MCF 10A (cell line): ENCODE measurements at regions of chr2 and their contacts with region 1.

Region 1: DNA sequence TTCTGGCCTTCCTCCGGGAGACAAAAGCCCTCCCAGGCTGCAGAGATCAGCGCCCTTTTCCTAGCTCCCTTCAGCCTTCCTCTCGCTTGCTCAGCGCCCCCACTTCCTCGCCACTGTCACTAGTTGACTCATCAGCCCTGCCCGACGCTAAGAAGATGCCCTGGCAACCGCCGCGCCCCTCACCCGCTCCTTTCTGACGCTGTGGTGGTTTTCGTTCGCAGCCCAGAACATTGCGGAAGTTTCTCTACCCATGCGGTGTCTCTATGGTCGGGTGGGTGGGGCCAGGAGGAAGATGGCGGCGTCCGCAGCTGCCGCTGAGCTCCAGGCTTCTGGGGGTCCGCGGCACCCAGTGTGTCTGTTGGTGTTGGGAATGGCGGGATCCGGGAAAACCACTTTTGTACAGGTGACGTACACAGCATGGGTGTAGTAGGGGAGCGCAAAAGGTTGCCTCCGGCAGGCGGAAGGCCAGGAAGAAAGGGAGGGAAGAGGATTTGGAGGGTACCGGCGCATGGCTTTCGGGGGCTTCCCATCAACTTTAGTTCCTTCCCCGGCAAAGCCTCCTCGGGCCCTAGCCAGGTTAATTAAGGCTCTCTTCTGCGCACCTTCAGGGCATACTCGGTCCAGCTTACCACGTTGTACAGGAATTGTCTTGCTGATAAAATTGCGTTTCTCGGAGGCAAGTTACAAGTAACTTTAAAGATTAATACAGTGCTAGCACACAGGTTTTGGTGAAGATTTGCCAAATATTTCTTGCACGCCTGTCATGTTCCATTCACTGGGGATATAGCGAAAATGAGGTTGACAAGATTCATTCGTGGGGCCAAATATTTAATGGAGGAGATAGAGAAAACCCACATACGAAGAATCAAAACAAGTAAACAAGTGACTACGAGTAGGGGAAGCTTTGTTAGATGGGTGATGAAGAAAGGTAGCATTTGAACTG is at the starts of genes CCDC121 and GPN1:
- DNase-seq: peak; percentile 90
- H3K4me3 Mint-ChIP-seq: no peak within 1 kb of the TSS
- H3K27ac Mint-ChIP-seq: no peak within 1 kb of the TSS
- H3K4me1 Mint-ChIP-seq: peaks cover 17% of the 10 kb centered on the region
- H3K27me3 Mint-ChIP-seq: no peaks in the 10 kb centered on the region
- CTCF ChIP-seq: no peak
- total RNA-seq, gene CCDC121: 0.61 and 2.3 TPM in 2 replicates
- total RNA-seq, gene GPN1: 28.6 and 30.5 TPM in 2 replicates

Region 2: DNA sequence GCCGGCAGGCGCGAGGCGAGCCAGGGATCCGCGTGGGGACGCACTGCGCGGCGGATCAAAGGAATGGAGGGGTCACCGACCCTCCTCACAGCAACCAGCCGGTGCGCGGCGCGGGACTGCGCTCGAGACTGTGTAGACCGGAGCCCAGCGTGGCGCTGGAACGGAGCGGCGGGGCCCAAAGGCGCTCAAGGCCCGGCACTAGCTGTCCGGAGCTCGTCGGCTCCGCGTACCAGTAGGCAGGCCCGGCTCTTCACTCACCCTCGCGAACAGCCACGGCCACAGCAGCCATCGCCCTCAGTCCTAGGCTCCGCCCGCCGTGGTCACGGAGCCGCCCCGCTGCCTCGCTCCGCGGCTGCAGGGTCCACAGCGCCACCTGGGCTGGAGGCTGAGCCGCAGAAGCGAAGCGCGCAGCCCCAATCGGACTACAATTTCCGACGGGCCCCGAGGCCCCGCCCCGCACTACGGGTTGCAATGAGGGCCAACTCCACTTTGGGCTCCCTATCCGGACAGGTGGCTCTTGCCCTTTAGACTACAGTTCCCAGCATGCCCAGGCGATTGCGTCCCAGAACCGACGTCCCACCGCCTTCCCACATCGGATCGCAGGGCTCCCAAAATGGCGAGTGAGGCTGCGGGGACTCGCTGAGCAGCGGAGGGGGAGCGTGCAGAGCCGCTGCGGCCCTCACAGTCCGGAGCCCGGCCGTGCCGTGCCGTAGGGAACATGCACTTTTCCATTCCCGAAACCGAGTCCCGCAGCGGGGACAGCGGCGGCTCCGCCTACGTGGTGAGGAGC is 258.8 kb before region 1 on chr2 and contains the starts of genes EIF2B4 and SNX17:
- CTCF ChIA-PET with region 1: no interaction called
- POLR2A ChIA-PET with region 1: interaction called, 18 read pairs
- intact Hi-C with region 1: no loop called
- DNase-seq: peak; percentile 99
- H3K4me3 Mint-ChIP-seq: peak within 1 kb of the TSS; percentile 86
- H3K27ac Mint-ChIP-seq: peak within 1 kb of the TSS; percentile 81
- H3K4me1 Mint-ChIP-seq: peaks cover 21% of the 10 kb centered on the region
- H3K27me3 Mint-ChIP-seq: no peaks in the 10 kb centered on the region
- CTCF ChIP-seq: peak; percentile 69
- total RNA-seq, gene EIF2B4: 42.7 and 50.1 TPM in 2 replicates
- total RNA-seq, gene SNX17: 101 and 125 TPM in 2 replicates

Region 3: DNA sequence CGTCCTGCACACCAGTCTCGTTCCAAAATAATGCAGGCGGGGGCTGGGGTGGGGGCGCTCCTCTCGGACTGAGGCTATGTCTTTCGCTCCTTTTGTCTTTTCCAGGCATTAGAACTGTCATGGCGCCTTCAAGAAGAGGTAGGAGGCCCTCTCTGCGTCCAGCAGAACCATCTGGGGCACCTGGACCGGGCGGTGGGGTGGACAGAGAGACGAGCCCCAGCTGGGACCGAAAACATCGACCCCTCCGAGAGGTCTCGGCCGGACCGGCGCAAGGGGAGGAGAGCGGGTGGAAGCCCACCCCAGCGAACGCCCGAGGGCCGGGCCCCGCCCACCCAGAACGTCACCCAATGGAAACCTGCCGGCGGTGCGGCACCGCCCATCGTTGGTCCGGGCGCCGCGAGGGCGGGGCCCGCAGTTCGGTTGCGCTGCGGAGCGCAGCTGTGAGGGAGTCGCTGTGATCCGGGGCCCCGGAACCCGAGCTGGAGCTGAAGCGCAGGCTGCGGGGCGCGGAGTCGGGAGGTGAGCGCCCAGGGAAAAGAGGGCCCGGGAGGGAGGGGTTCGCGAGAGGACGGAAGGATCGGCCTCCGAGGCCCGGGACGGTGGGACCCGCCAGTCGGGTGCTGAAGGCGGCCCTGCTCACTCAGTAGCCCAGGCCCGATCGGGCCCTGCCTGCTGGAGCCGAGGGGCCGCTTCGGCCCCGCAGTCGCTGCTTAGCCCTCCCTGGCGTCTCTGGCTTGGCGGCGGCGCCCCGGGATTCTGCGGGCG is 200.6 kb before region 1 on chr2 and contains the start of gene NRBP1:
- CTCF ChIA-PET with region 1: interaction called, 5 read pairs
- POLR2A ChIA-PET with region 1: interaction called, 56 read pairs
- intact Hi-C with region 1: loop called (anchors 5 kb)
- DNase-seq: peak; percentile 87
- H3K4me3 Mint-ChIP-seq: peak within 1 kb of the TSS; percentile 94
- H3K27ac Mint-ChIP-seq: peak within 1 kb of the TSS; percentile 94
- H3K4me1 Mint-ChIP-seq: peaks cover 15% of the 10 kb centered on the region
- H3K27me3 Mint-ChIP-seq: no peaks in the 10 kb centered on the region
- CTCF ChIP-seq: no peak
- total RNA-seq, gene NRBP1: 79.5 and 97.3 TPM in 2 replicates

Region 4: GRCh38 chr2:27489498-27490397 is 139.3 kb before region 1 on chr2 and contains the start of gene IFT172:
- CTCF ChIA-PET with region 1: interaction called, 3 read pairs
- POLR2A ChIA-PET with region 1: interaction called, 8 read pairs
- intact Hi-C with region 1: loop called (anchors 2 kb)
- DNase-seq: peak; percentile 99
- H3K4me3 Mint-ChIP-seq: peak within 1 kb of the TSS; percentile 92
- H3K27ac Mint-ChIP-seq: peak within 1 kb of the TSS; percentile 87
- H3K4me1 Mint-ChIP-seq: peaks cover 6% of the 10 kb centered on the region
- H3K27me3 Mint-ChIP-seq: no peaks in the 10 kb centered on the region
- CTCF ChIP-seq: no peak
- total RNA-seq, gene IFT172: 20.6 and 22.3 TPM in 2 replicates

Region 5: DNA sequence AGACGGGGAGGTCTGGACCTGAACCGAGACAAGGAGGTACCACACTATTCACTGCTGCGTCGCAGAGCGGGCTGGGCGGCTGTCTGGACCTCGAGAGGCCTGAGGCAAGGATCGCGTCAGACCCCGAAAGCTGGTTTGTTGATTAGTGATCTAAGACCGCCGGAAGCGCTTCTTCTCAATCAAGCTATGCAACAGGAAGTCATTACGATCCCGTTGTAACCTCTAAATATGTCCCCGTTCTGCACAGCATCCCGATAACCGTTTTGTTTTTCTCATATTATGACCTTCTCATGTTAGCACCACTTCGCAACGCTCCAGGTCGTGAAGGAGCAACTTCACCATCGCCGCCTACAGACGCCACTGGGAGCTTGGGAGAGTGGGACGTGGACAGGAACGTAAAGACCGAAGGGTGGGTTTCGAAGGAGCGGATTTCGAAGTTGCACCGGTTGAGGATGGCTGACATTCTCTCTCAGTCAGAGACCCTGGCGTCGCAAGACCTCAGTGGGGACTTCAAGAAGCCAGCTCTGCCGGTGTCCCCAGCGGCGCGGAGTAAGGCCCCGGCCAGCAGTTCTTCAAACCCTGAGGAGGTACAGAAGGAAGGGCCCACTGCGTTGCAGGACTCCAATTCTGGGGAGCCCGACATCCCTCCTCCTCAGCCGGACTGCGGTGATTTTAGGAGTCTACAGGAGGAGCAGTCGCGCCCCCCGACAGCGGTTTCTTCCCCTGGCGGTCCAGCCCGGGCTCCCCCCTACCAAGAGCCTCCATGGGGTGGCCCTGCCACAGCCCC is 34.6 kb after region 1 on chr2 and contains the starts of genes SLC4A1AP and SUPT7L:
- CTCF ChIA-PET with region 1: no interaction called
- POLR2A ChIA-PET with region 1: interaction called, 25 read pairs
- intact Hi-C with region 1: no loop called
- DNase-seq: peak; percentile 83
- H3K4me3 Mint-ChIP-seq: peak within 1 kb of the TSS; percentile 92
- H3K27ac Mint-ChIP-seq: peak within 1 kb of the TSS; percentile 95
- H3K4me1 Mint-ChIP-seq: peaks cover 29% of the 10 kb centered on the region
- H3K27me3 Mint-ChIP-seq: no peaks in the 10 kb centered on the region
- CTCF ChIP-seq: no peak
- total RNA-seq, gene SLC4A1AP: 24.3 and 27.2 TPM in 2 replicates
- total RNA-seq, gene SUPT7L: 36.4 and 40.8 TPM in 2 replicates